ENCODE measurements at regions of chr10 and their contacts with region 1.

Region 1: DNA sequence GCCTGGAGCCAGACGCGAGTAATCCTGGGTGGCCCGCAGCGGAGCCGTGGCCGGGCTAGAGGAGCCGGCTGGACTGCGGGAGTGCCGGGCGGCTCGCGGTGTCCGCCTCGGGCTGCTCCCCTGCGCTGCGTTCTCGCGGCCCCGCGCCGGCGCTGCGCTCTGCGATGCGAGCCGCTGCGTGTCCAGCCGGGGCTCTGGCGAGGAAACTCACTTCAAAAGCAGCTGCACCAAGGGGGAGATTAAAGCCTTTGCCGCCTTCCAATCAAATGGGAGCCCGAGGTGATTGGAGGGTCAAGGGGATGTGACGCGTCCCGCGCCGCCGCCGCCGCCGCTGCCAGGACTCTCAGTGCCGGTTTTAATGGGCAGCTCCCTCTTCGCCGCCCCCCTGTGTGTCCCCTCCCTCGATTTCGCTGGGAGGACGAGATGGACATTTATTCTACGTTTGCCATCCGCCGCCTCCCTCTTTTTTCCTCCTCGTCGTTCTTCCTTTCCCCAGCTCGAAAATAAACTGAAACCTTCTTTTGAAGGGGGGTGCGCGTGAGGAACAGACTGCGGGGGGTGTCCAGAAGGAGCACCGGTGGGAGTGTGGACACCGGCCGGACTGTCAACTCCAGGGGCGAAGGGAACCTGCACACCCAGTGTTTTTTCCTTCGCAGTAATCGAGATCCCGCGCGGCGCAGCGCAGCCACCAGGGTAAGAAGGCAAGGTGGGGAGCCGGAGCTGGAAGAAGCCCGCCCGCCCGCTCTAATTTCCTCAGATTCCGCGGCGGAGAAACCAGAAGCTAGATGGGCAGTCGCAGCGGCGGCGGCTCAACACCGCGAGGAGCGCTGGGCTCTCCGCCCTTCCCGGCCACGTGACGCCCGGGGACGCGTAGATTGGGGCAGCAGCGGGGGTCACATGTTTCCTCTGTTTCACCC is at the start of gene ZNF503:
- DNase-seq: peak; percentile 95
- H3K4me3 ChIP-seq: peak within 1 kb of the TSS; percentile 82 to 96
- H3K27ac ChIP-seq: peak within 1 kb of the TSS; percentile 93 to 98
- H3K4me1 ChIP-seq: peaks cover 0 to 20% of the 10 kb centered on the region in 2 experiments; a peak in 2 of 4 replicates
- H3K27me3 ChIP-seq: no peaks in the 10 kb centered on the region
- CTCF ChIP-seq: 0 out of 2 replicates have a peak, but pooled peaks have one; percentile 14
- EP300 ChIP-seq: peak in 1 of 2 experiments; percentile 34; a peak in 2 of 4 replicates
- RAD21 ChIP-seq: peak; percentile 43
- polyA plus RNA-seq, gene ZNF503: 4.5 and 5.9 TPM in 2 replicates

Region 2: DNA sequence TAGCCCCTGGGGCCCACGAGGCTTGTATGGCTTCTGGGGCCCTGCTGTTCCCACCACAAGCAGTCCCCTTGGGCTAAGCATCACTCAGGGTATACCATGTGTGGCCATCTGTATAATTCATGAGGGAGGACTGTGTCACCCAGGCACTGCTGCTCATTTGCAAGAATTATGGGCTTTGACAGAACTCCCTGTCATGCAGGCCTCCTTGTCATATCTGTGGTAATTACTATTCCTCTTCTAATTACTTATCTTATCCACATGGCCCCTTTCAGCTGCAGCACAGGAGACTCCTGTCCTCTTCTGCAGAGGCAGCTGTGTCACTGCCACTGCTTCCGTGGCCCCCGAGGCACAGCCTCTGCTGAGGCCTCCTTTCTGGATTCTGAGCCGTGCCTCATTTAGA is 75.9 kb after region 1 on chr10:
- CTCF ChIA-PET with region 1: no interaction called
- POLR2A ChIA-PET with region 1: interaction called, 13 read pairs
- DNase-seq: peak; percentile 76
- H3K4me3 ChIP-seq: no peak overlapping the region
- H3K27ac ChIP-seq: peak overlapping the region in 1 of 2 experiments; percentile 89; a peak in 2 of 4 replicates
- H3K4me1 ChIP-seq: peaks cover 0 to 16% of the 10 kb centered on the region in 2 experiments; a peak in 2 of 4 replicates
- H3K27me3 ChIP-seq: no peaks in the 10 kb centered on the region
- CTCF ChIP-seq: no peak
- EP300 ChIP-seq: peak in 1 of 2 experiments; percentile 99; a peak in 2 of 4 replicates
- RAD21 ChIP-seq: peak; percentile 19; the same call in 1 of the 2 replicates

Region 3: GRCh38 chr10:75508239-75508813 is 106.5 kb after region 1 on chr10:
- CTCF ChIA-PET with region 1: interaction called, 5 read pairs
- POLR2A ChIA-PET with region 1: interaction called, 11 read pairs
- DNase-seq: peak; percentile 67
- H3K4me3 ChIP-seq: peak overlapping the region in 1 of 2 experiments; percentile 11; a peak in 1 of 4 replicates
- H3K27ac ChIP-seq: peak overlapping the region; percentile 77 to 98
- H3K4me1 ChIP-seq: peaks cover 7 to 29% of the 10 kb centered on the region in 2 experiments; a peak in 2 of 4 replicates
- H3K27me3 ChIP-seq: no peaks in the 10 kb centered on the region
- CTCF ChIP-seq: no peak
- EP300 ChIP-seq: peak; percentile 98 to 100
- RAD21 ChIP-seq: peak; percentile 29; the same call in 1 of the 2 replicates

Region 4: GRCh38 chr10:75643944-75644692 is 242.3 kb after region 1 on chr10:
- CTCF ChIA-PET with region 1: interaction called, 8 read pairs
- POLR2A ChIA-PET with region 1: interaction called, 16 read pairs
- DNase-seq: peak; percentile 54
- H3K4me3 ChIP-seq: no peak overlapping the region
- H3K27ac ChIP-seq: peak overlapping the region in 1 of 2 experiments; percentile 67; a peak in 2 of 4 replicates
- H3K4me1 ChIP-seq: peaks cover 5 to 20% of the 10 kb centered on the region in 2 experiments; a peak in 2 of 4 replicates
- H3K27me3 ChIP-seq: no peaks in the 10 kb centered on the region
- CTCF ChIP-seq: no peak
- EP300 ChIP-seq: peak in 1 of 2 experiments; percentile 77; a peak in 2 of 4 replicates
- RAD21 ChIP-seq: peak; percentile 1; the same call in 1 of the 2 replicates

Region 5: GRCh38 chr10:76036111-76036940 is 634.5 kb after region 1 on chr10:
- CTCF ChIA-PET with region 1: interaction called, 26 read pairs
- POLR2A ChIA-PET with region 1: interaction called, 18 read pairs
- DNase-seq: peak; percentile 81
- H3K4me3 ChIP-seq: peak overlapping the region in 1 of 2 experiments; percentile 45; a peak in 1 of 4 replicates
- H3K27ac ChIP-seq: no peak overlapping the region
- H3K4me1 ChIP-seq: peaks cover 0 to 27% of the 10 kb centered on the region in 2 experiments; a peak in 2 of 4 replicates
- H3K27me3 ChIP-seq: no peaks in the 10 kb centered on the region
- CTCF ChIP-seq: peak; percentile 91
- EP300 ChIP-seq: 0 out of 4 replicates have a peak, but pooled peaks of 1 of the 2 experiments have one; percentile 29
- RAD21 ChIP-seq: peak; percentile 95

Region 6: DNA sequence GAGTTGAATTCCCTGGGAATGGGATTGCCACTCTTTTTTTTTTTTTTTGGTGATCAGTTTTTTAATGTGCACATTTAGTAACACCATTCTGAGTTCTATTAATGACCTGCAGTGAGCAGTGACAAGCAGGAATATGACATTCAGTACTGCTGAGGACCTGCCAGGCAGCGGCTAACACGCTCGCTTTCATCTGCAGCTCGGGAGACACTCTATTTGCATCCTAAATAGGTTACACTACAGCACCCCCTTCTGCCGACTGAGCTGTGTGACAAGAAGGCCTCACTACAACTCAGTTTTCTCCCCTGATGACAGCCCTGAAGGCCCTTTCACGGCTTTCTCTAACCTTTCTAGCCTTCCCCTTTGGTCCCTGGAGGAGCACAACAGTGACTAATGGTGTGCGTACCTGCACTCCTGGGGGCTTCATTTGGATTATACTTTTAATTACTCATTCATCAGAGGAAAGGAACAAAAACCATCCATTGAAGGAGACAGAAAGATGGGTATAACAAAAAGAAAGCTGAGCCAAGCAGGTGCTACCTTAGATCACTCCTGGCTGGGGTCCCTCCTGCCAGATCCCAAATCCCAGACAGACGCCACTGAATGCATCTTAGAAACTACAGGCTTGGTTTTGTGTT is 902.0 kb after region 1 on chr10:
- CTCF ChIA-PET with region 1: interaction called, 12 read pairs
- POLR2A ChIA-PET with region 1: interaction called, 10 read pairs
- DNase-seq: peak; percentile 70
- H3K4me3 ChIP-seq: no peak overlapping the region; a peak in 1 of 4 replicates
- H3K27ac ChIP-seq: no peak overlapping the region
- H3K4me1 ChIP-seq: peaks cover 1 to 7% of the 10 kb centered on the region in 2 experiments
- H3K27me3 ChIP-seq: no peaks in the 10 kb centered on the region
- CTCF ChIP-seq: peak; percentile 58
- EP300 ChIP-seq: no peak
- RAD21 ChIP-seq: peak; percentile 93

Region 7: DNA sequence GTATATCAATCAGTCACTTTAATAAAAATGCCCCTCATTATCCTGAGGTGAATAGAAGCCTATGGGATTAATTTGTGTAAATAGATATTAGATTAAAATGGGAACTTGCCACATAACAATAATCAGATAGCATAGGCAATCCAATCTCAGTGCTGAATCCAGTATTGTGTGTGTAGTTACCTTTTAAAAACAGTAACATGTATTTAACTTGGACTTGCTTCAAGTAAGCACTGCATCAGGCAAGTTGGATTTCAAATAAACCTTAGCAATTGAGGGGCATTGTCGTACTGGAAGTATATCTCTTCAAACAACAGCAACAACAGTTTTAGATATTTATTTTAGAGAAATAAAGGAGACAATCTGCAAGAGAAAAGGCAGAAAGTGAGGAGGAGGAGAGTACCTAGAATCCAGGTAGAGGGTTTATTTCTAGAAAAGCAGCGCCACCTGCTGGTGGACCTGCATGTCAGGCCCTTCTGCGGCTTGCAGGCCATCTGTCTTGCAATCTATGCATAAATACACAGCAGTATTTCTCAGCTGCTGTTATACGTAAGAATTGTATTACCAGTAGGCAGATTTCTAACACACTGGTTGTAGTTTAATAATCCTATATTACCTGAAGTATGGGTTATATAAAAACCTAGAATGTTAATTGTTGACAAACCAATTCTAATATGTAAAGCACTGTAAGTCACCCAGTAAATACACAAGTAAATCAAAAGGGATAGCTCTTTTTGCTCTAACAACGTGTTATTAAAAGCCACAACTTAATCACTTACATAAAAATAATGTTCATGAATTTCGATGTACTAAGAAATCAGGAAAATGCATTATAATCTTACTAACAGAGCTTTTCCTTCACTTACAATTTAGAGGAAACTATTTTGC is 1583.0 kb after region 1 on chr10:
- CTCF ChIA-PET with region 1: interaction called, 18 read pairs
- POLR2A ChIA-PET with region 1: no interaction called
- DNase-seq: peak; percentile 57
- H3K4me3 ChIP-seq: peak overlapping the region in 1 of 2 experiments; percentile 17; a peak in 1 of 4 replicates
- H3K27ac ChIP-seq: peak overlapping the region in 1 of 2 experiments; percentile 90; a peak in 2 of 4 replicates
- H3K4me1 ChIP-seq: peaks cover 0 to 21% of the 10 kb centered on the region in 2 experiments; a peak in 2 of 4 replicates
- H3K27me3 ChIP-seq: no peaks in the 10 kb centered on the region
- CTCF ChIP-seq: peak; percentile 99
- EP300 ChIP-seq: peak in 1 of 2 experiments; percentile 44; a peak in 1 of 4 replicates
- RAD21 ChIP-seq: peak; percentile 95

Measured in SK-N-SH (cell line).